GM13977 (cell line): ENCODE measurements at regions of chr2 and their contacts with region 1.

Region 1: DNA sequence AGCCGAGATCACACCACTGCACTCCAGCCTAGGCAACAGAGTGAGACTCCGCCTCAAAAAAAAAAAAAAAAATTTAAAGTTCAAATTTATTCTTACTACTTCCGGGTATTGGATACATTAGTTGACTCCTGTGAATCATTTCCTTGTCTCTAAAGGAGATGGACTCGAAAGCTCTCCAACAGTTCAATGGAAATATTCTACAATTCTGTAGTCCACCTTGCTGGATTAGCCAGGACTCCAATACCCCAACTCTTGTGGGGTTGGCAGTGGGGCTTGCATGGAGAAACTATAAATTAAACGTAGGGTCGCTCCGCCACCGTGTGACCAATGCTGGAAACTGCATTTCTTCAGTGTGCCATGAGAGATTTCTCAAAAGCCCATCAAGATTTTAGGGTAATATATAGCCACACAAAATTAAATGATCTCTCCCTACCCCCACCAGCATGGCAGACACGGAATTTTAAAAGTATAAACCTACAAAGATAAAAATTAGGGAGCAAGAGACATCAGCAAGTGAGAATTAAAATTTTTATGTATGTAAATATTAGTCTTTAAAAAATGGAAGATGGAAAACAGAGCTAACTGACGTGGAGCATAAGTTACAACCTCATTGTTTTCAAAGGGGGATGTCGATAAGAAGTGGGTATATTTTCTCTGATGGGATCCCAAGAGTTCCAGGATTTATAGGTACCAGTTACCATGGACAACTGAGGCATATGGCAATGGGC is 27.8 kb upstream of the GAREM2 start:
- DNase-seq: peak; percentile 73
- CTCF ChIP-seq: peak; percentile 79

Region 2: GRCh38 chr2:25991965-25992364 is 153.2 kb before region 1 on chr2:
- in situ Hi-C with region 1: loop called (anchors 10 kb)
- DNase-seq: no peak
- CTCF ChIP-seq: no peak

Region 3: GRCh38 chr2:26246818-26247217 is 101.7 kb after region 1 on chr2:
- in situ Hi-C with region 1: no loop called
- DNase-seq: no peak
- CTCF ChIP-seq: no peak